ENCODE measurements at regions of chr4 and their contacts with region 1.

Region 1: GRCh38 chr4:78864405-78865024 is 74.7 kb downstream of the PAQR3 start:
- DNase-seq: peak; percentile 81
- H3K4me3 ChIP-seq: no peak overlapping the region
- H3K27ac ChIP-seq: no peak overlapping the region
- H3K4me1 ChIP-seq: no peaks in the 10 kb centered on the region
- H3K27me3 ChIP-seq: no peaks in the 10 kb centered on the region

Region 2: GRCh38 chr4:77959566-77960338 is 904.8 kb before region 1 on chr4:
- in situ Hi-C with region 1: loop called (anchors 25 kb)
- DNase-seq: peak; percentile 73
- H3K4me3 ChIP-seq: no peak overlapping the region
- H3K27ac ChIP-seq: no peak overlapping the region
- H3K4me1 ChIP-seq: no peaks in the 10 kb centered on the region
- H3K27me3 ChIP-seq: no peaks in the 10 kb centered on the region

Region 3: DNA sequence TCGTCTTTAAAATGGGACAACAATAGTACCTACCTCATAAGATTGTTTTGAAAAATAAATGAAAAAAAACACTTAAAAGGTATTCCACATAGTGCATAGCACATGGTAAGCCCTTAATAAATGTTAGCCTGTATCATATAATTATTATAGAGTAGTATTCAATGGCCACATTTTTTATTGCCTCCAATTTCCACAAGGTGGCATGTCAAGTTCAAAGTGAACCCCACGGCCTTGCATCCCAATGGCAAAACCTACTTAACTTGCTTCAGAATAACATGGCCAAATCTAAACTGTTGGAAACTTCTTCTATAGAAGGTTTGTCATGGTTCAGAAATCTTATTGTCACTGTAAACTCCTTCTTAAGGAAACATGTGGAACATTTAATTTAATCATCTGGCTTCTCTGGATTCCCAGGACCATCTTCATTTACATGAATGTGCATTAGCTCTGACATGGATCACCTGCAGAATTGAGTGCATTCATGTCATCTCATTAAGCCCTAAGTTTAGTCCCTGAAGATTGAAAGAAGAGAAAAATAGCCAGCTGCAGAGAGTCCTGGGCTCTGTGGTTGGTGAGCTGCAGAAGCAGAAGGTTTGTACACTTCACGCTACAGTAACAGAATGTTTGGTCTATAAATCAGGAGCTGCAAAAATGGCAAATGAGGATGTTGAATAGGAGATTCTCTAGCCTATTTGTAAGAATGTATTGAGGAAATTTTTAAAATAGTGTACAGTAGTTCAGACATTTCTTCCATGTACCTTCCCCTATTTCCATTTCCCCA is 251.9 kb before region 1 on chr4:
- in situ Hi-C with region 1: loop called (anchors 10 kb)
- DNase-seq: peak; percentile 77
- H3K4me3 ChIP-seq: no peak overlapping the region
- H3K27ac ChIP-seq: no peak overlapping the region
- H3K4me1 ChIP-seq: peaks cover 11% of the 10 kb centered on the region
- H3K27me3 ChIP-seq: no peaks in the 10 kb centered on the region

Measured in GM23248 (cell line).